CD8-positive, alpha-beta memory T cell (primary cell): ENCODE measurements at regions of chr17 and their contacts with region 1.

Region 1: GRCh38 chr17:48636177-48637018 is 10.2 kb upstream of the HOXB9 start:
- DNase-seq: peak; percentile 38 to 69 (median 55)
- H3K4me3 ChIP-seq: no peak overlapping the region
- H3K4me3 Mint-ChIP-seq: peak overlapping the region in 5 of 7 donors; percentile 5 to 47 (median 29)
- H3K27ac ChIP-seq: no peak overlapping the region
- H3K27ac Mint-ChIP-seq: peak overlapping the region in 1 of 8 donors; percentile 61
- H3K4me1 ChIP-seq: peaks cover 9% of the 10 kb centered on the region
- H3K4me1 Mint-ChIP-seq: peaks cover 12 to 22% (median 17%) of the 10 kb centered on the region in 3 donors
- H3K27me3 ChIP-seq: peaks cover 49% of the 10 kb centered on the region
- H3K27me3 Mint-ChIP-seq: peaks cover 71 to 92% of the 10 kb centered on the region in 2 donors

Region 2: DNA sequence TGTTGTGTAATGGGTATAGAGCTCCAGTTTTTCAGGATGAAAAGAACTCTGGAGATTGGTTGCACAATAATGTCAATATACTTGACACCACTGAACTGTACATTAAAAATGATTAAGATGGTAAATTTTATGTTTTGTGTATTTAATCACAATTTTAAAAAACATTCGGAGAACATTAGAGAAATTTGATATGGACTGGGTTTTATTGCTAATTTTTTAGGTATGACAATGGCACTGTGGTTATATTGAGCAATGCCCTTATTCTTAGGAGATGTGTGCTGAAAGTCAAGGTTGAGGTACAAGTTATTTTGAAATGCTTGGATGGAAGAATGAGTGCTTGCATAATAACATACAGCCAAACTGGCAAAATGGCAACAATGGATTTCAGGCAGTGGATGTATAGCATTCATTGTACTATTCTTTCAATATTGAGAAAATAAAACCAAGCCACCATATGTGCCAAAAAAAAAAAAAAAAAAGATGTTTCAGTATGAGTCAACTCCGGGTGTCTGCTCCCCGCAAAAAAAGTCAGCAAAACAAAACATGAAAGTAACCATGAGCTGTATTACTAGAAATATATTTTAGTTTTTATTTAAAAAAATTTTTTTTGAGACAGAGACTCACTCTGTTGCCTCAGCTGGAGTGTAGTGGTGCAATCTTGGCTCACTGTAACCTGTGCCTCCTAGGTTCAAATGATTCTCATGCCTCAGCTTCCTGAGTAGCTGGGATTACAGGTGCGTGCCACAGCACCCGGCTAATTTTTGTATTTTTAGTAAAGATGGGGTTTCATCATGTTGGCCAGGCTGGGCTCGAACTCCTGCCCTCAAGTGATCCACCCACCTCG is 125.4 kb before region 1 on chr17:
- CTCF ChIA-PET with region 1: no interaction called
- POLR2A ChIA-PET with region 1: no interaction called
- DNase-seq: peak in 1 of 5 donors; percentile 65
- H3K4me3 ChIP-seq: no peak overlapping the region
- H3K4me3 Mint-ChIP-seq: peak overlapping the region in 4 of 7 donors; percentile 1 to 61 (median 10)
- H3K27ac ChIP-seq: no peak overlapping the region
- H3K27ac Mint-ChIP-seq: peak overlapping the region in 3 of 8 donors; percentile 24 to 69 (median 34)
- H3K4me1 ChIP-seq: peaks cover 7% of the 10 kb centered on the region
- H3K4me1 Mint-ChIP-seq: peaks cover 8 to 49% (median 29%) of the 10 kb centered on the region in 3 donors
- H3K27me3 ChIP-seq: no peaks in the 10 kb centered on the region
- H3K27me3 Mint-ChIP-seq: peaks cover 7 to 18% of the 10 kb centered on the region in 2 donors

Region 3: DNA sequence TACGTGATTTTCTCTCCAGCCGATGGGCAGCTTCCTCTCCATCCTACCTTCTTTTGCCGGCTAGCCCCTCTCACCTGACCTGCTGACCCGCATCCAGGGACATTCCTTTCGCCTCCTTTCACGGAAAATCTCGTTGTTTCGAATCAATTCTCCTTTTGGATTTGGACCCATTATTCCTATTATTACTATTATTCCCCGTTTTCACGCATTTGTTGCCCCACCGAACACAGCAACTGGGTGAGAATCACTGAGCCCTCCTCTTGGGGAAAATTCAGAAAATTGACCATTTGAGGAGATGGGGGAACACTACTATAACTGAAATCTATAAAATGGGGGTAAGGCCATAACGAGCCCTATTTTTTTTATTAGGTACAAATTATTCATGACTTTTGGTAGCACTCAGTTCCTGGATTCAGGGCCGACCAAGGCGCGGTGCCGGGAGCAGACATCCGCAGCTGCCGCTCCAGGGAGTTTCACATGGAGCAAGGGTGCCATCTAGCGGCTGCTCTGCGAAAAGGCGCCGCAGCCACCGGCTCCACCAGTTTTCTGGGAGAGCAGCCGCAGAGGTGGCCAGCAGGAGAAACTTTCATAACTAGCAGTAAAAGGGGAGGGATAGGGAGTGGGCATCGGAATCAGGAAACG is 18.0 kb before region 1 on chr17:
- CTCF ChIA-PET with region 1: interaction called, 16 read pairs
- POLR2A ChIA-PET with region 1: no interaction called
- DNase-seq: peak; percentile 73 to 85 (median 78)
- H3K4me3 ChIP-seq: no peak overlapping the region
- H3K4me3 Mint-ChIP-seq: peak overlapping the region in 6 of 7 donors; percentile 20 to 67 (median 48)
- H3K27ac ChIP-seq: no peak overlapping the region
- H3K27ac Mint-ChIP-seq: peak overlapping the region in 2 of 8 donors; percentile 28 to 92
- H3K4me1 ChIP-seq: peaks cover 33% of the 10 kb centered on the region
- H3K4me1 Mint-ChIP-seq: peaks cover 31 to 48% (median 43%) of the 10 kb centered on the region in 3 donors
- H3K27me3 ChIP-seq: peaks cover 86% of the 10 kb centered on the region
- H3K27me3 Mint-ChIP-seq: peaks cover 87 to 95% of the 10 kb centered on the region in 2 donors

Region 4: GRCh38 chr17:48625495-48626244 is 10.7 kb before region 1 on chr17:
- CTCF ChIA-PET with region 1: interaction called, 15 read pairs
- POLR2A ChIA-PET with region 1: interaction called, 3 read pairs
- DNase-seq: peak in 2 of 5 donors; percentile 36 to 37
- H3K4me3 ChIP-seq: peak overlapping the region; percentile 41
- H3K4me3 Mint-ChIP-seq: peak overlapping the region; percentile 76 to 91 (median 84)
- H3K27ac ChIP-seq: peak overlapping the region; percentile 79
- H3K27ac Mint-ChIP-seq: peak overlapping the region in 3 of 8 donors; percentile 8 to 77 (median 12)
- H3K4me1 ChIP-seq: peaks cover 21% of the 10 kb centered on the region
- H3K4me1 Mint-ChIP-seq: peaks cover 6 to 21% (median 12%) of the 10 kb centered on the region in 3 donors
- H3K27me3 ChIP-seq: peaks cover 81% of the 10 kb centered on the region
- H3K27me3 Mint-ChIP-seq: peaks cover 59 to 91% of the 10 kb centered on the region in 2 donors

Region 5: GRCh38 chr17:48646183-48647102 is 10.0 kb after region 1 on chr17:
- CTCF ChIA-PET with region 1: interaction called, 13 read pairs
- POLR2A ChIA-PET with region 1: no interaction called
- DNase-seq: peak in 4 of 5 donors; percentile 19 to 62 (median 34)
- H3K4me3 ChIP-seq: peak overlapping the region; percentile 57
- H3K4me3 Mint-ChIP-seq: peak overlapping the region; percentile 82 to 96 (median 87)
- H3K27ac ChIP-seq: no peak overlapping the region
- H3K27ac Mint-ChIP-seq: peak overlapping the region in 4 of 8 donors; percentile 13 to 97 (median 54)
- H3K4me1 ChIP-seq: peaks cover 15% of the 10 kb centered on the region
- H3K4me1 Mint-ChIP-seq: peaks cover 14 to 35% (median 25%) of the 10 kb centered on the region in 3 donors
- H3K27me3 ChIP-seq: peaks cover 30% of the 10 kb centered on the region
- H3K27me3 Mint-ChIP-seq: peaks cover 47 to 52% of the 10 kb centered on the region in 2 donors

Region 6: DNA sequence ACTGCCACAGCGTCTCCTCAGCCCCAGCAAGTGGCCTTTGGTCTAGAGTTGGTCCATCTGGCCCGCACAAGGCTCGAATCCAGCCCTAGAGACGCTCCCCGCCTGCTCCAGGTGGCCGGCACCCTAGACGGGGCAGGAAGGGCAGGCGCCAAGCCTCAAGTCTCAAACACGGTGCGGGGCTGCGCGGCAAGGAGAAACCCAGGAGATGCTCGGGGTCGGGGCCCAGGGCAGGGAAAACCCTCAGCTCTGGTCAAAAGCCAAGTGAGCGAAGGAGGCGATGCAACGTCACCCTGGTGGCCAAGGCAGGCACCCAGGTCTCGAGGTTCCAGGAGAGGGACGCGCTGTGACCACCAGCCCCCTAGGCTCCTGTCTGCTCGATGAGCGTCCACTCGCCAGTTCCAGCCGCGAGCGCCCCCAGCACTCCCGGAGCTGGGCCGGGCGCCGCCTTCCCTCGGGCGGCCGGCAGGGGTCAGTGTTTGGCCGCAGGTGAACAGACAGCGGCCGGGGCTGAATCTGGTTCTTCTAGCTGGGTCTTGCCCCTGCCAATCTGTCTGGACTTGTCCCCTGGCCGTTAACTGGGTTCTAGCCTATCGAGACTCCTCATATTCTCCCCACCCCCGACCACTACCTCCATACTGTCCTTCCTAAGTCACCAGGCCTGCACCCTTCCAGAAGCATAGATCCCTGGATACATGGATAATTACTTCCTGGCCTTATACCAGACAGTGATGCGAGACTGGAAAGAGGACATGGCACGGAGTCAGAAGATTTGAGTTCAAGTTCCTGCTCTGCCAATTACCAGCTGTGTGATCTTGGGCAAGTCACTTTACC is 42.0 kb after region 1 on chr17:
- CTCF ChIA-PET with region 1: interaction called, 12 read pairs
- POLR2A ChIA-PET with region 1: no interaction called
- DNase-seq: peak; percentile 55 to 70 (median 63)
- H3K4me3 ChIP-seq: no peak overlapping the region
- H3K4me3 Mint-ChIP-seq: peak overlapping the region in 4 of 7 donors; percentile 20 to 56 (median 46)
- H3K27ac ChIP-seq: no peak overlapping the region
- H3K27ac Mint-ChIP-seq: peak overlapping the region in 1 of 8 donors; percentile 10
- H3K4me1 ChIP-seq: peaks cover 3% of the 10 kb centered on the region
- H3K4me1 Mint-ChIP-seq: peaks cover 0 to 7% (median 0%) of the 10 kb centered on the region in 3 donors
- H3K27me3 ChIP-seq: peaks cover 9% of the 10 kb centered on the region
- H3K27me3 Mint-ChIP-seq: peaks cover 30 to 45% of the 10 kb centered on the region in 2 donors

Region 7: DNA sequence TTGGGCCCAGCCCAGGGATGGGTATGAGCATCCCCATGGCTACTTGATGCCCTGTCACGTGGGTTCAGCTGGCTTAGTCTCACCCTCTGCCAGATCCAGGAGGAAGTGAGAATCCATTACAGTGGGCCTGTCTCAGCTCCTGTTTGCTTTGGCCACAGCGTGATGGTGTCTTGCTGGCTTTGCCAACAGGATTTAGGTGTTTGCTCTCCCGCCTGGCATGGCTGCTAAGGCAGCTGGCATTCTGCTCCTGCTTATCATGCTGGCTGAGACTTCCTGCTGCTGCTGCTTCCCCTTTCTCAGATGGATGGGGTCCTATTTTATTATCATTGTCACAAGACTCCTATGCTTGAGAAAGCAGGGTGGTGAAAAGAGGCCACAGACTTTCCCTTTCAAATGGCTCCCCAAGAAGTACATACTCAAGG is 120.4 kb after region 1 on chr17:
- CTCF ChIA-PET with region 1: no interaction called
- POLR2A ChIA-PET with region 1: no interaction called
- DNase-seq: no peak
- H3K4me3 ChIP-seq: no peak overlapping the region
- H3K4me3 Mint-ChIP-seq: no peak overlapping the region
- H3K27ac ChIP-seq: no peak overlapping the region
- H3K27ac Mint-ChIP-seq: no peak overlapping the region
- H3K4me1 ChIP-seq: no peaks in the 10 kb centered on the region
- H3K4me1 Mint-ChIP-seq: peaks cover 15 to 18% (median 16%) of the 10 kb centered on the region in 3 donors
- H3K27me3 ChIP-seq: peaks cover 60% of the 10 kb centered on the region
- H3K27me3 Mint-ChIP-seq: peaks cover 58 to 89% of the 10 kb centered on the region in 2 donors

Region 8: GRCh38 chr17:48816774-48817590 is 180.6 kb after region 1 on chr17 and contains the start of gene TTLL6:
- CTCF ChIA-PET with region 1: no interaction called
- POLR2A ChIA-PET with region 1: no interaction called
- DNase-seq: peak; percentile 67 to 85 (median 75)
- H3K4me3 ChIP-seq: peak within 1 kb of the TSS; percentile 69
- H3K4me3 Mint-ChIP-seq: peak within 1 kb of the TSS; percentile 29 to 89 (median 76)
- H3K27ac ChIP-seq: no peak within 1 kb of the TSS
- H3K27ac Mint-ChIP-seq: peak within 1 kb of the TSS in 3 of 8 donors; percentile 63 to 90 (median 68)
- H3K4me1 ChIP-seq: peaks cover 13% of the 10 kb centered on the region
- H3K4me1 Mint-ChIP-seq: peaks cover 13 to 24% (median 14%) of the 10 kb centered on the region in 3 donors
- H3K27me3 ChIP-seq: peaks cover 20% of the 10 kb centered on the region
- H3K27me3 Mint-ChIP-seq: peaks cover 30 to 60% of the 10 kb centered on the region in 2 donors
- total RNA-seq, gene TTLL6: not detected